ENCODE measurements at regions of chr1 and their contacts with region 1.

Region 1: DNA sequence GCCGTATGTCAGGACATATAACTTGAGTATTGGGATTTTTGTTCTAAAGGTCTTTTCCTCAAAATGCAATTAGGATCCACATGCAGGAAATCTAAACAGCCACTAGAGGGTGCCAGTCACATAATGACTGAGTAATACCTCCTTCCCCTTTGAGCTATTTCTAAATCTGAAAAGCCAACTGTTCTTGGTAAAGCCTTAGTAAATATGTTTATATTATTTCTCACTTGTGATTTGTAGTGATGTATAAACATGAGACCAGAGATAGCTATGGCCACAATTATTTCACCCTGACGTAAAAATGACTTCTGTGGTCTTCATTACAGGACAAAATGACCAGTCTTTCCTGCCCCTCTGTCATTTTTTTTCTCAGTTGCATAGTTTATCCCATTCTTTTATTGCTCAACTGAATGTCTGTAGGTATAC is 41.0 kb upstream of the DR1 start:
- DNase-seq: peak; percentile 80
- H3K4me3 Mint-ChIP-seq: no peak overlapping the region
- H3K27ac Mint-ChIP-seq: no peak overlapping the region
- H3K4me1 Mint-ChIP-seq: no peaks in the 10 kb centered on the region
- H3K27me3 Mint-ChIP-seq: no peaks in the 10 kb centered on the region
- CTCF ChIP-seq: peak; percentile 81

Region 2: GRCh38 chr1:93078986-93079654 is 225.6 kb before region 1 on chr1 and contains the start of gene MTF2:
- CTCF ChIA-PET with region 1: no interaction called
- POLR2A ChIA-PET with region 1: interaction called, 7 read pairs
- intact Hi-C with region 1: loop called (anchors 2 kb)
- DNase-seq: peak; percentile 93
- H3K4me3 Mint-ChIP-seq: peak within 1 kb of the TSS; percentile 99
- H3K27ac Mint-ChIP-seq: peak within 1 kb of the TSS; percentile 95
- H3K4me1 Mint-ChIP-seq: peaks cover 12% of the 10 kb centered on the region
- H3K27me3 Mint-ChIP-seq: no peaks in the 10 kb centered on the region
- CTCF ChIP-seq: no peak
- total RNA-seq, gene MTF2: 17.0 and 20.0 TPM in 2 replicates

Region 3: GRCh38 chr1:93338421-93338820 is 33.7 kb after region 1 on chr1:
- CTCF ChIA-PET with region 1: interaction called, 5 read pairs
- POLR2A ChIA-PET with region 1: interaction called, 14 read pairs
- intact Hi-C with region 1: no loop called
- DNase-seq: peak; percentile 85
- H3K4me3 Mint-ChIP-seq: peak overlapping the region; percentile 28
- H3K27ac Mint-ChIP-seq: peak overlapping the region; percentile 87
- H3K4me1 Mint-ChIP-seq: peaks cover 22% of the 10 kb centered on the region
- H3K27me3 Mint-ChIP-seq: no peaks in the 10 kb centered on the region
- CTCF ChIP-seq: no peak

Region 4: DNA sequence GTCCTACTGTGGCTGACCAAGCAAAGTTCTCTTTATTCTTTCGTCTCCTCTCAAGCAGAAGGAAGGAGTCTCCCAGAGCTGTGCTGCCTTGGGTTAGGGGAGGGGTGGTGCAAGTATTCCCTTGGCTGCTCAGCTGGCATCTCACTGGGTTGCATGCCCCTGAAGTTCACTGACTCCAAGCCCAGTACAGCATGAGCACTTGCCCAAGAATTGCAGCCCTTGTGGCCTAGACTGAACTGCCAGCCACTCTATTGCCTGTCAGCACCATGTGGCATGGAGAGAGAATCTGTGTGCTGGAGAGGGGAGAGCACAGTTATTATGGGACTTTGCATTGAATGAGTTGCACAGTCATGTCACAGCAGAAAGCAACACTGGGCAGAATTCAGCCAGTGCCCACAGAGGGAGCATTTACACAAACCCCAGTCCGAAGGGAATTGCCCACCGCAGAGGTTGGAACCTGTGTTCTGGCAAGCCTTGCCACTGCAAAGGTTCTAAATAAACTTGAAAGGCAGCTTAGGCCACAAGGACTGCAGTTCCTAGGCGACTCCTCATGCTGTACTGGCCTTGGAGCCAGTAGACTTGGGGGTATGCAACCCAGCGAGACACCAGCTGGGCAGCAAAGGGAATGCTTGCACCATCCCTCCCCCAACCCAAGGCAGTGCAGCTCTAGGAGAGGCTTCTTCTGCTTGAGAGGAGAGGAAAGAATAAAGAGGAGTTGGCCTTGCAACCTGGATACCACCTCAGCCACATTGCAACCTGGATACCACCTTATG is 69.8 kb after region 1 on chr1:
- CTCF ChIA-PET with region 1: interaction called, 13 read pairs
- POLR2A ChIA-PET with region 1: no interaction called
- intact Hi-C with region 1: no loop called
- DNase-seq: no peak
- H3K4me3 Mint-ChIP-seq: no peak overlapping the region
- H3K27ac Mint-ChIP-seq: no peak overlapping the region
- H3K4me1 Mint-ChIP-seq: no peaks in the 10 kb centered on the region
- H3K27me3 Mint-ChIP-seq: no peaks in the 10 kb centered on the region
- CTCF ChIP-seq: no peak

Region 5: GRCh38 chr1:93567255-93567918 is 262.7 kb after region 1 on chr1:
- CTCF ChIA-PET with region 1: no interaction called
- POLR2A ChIA-PET with region 1: no interaction called
- intact Hi-C with region 1: loop called (anchors 10 kb)
- DNase-seq: peak; percentile 48
- H3K4me3 Mint-ChIP-seq: no peak overlapping the region
- H3K27ac Mint-ChIP-seq: peak overlapping the region; percentile 73
- H3K4me1 Mint-ChIP-seq: peaks cover 9% of the 10 kb centered on the region
- H3K27me3 Mint-ChIP-seq: no peaks in the 10 kb centered on the region
- CTCF ChIP-seq: no peak